Right ventricle myocardium superior (tissue), 1 donor: ENCODE measurements at regions of chr14 and their contacts with region 1.

Region 1: DNA sequence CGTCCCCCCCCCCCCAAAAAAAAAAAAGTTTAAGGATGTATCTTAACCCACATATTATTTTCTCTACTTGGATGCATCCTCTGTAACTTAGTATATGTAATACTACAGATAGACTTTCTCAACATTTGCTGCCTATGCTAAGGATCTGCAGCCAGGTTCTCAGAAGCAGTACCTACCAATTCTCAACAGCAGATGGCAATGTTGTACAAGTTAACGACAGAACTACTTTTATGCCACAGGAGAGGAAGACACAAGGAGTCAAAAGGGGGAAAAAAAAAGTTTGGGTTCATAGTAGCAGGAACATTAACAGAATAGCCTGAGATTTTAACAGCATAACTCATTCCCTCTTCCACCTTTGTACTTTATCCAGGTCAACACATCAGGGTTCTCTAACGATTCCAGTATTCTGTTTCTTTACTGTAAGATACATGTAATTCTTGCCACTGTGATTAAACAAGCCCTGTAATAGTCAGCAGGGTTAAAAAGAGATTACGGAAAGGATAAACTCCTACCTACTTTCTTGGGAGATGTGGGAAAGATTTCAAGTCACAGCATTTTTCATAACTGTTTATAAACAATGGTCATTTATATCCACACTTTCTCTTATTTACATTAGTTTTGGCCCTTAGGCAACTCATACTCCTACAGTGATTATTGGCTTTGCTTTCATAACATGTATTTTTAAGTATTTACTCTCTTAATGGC is 5.7 kb upstream of the NEK9 start:
- DNase-seq: no peak
- ATAC-seq: peak; percentile 80

Region 2: DNA sequence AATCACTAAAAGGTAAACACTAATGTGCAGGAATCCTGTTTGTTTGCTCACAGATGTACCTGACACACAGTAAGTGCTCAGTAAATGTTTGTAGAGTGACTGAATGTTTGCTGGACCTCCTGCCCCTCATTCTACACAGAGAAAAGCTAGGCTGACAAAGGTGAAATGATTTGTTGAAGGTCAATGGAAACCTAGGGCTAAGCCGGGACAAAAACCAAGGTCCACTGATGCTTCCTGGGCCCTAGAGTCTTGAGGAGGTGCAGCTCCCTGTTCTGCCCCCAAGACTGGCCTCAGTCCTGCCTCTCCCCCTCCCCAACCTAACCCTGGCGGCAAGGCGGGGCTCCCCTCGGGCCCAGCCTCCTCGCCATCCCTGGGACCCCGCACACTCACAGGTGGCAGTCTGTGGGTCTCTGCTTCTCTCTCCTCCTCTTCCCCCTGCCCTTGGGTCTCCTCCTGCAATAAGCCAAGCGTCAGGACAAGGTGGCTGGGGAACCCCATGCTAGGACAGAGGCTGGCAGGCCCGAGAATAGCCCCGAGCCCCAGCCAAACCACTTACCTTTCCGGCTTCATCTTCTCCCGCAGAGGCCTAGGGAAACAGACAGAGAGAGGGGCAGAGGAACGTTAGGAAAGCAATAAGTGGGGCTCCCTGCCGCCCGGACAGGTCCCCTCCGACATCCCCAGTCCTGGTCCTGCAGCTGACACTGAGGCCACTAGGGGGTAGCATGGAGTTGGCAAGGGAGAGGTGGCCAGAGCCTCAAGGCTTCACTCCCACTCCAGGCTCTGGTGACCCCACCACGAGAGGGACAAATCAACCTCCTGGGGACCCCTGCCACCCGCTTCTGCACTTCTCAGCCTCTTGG is 186.5 kb before region 1 on chr14:
- intact Hi-C with region 1: no loop called
- DNase-seq: peak; percentile 80
- ATAC-seq: peak; percentile 86

Region 3: DNA sequence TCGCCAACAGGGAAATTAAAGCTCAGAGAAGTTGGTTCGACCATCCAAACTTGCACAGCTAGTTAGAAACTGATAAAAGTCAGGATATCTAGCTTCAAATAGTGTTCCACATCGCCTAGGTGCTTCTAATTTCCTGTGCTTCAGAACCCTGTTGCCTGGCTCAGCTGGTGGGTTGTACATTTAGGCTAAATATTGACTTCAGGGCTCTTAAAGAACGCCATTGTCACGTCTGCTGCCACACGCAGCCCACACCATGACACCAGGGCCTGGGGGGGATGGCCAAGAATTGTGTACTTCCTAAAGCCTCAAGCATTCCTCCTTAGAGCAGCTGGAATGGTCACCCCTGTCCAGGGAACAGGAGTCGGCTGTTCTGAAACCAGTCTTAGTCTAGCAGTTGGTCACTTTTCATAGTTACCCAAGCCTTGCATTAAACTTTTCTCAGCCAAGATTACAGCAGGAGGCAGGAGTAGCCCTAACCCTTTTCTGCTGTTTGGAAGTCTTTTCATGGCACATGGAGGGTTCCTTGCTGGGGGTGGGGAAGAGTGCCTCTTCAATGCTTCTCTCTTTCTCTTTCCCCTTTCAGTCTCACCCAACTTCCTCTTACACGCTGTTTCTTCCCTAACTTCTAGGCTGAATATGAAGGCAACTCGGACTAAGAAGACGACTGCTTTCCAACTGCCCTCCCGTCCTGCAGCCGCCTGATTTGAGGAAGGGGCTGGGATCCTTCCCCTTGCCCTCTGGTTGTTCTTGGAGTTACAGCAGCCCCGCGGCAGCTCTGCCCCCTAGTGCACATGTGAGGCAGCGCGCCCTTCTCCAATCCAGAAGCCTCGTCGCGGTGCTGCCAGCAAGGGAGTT is 163.2 kb after region 1 on chr14:
- intact Hi-C with region 1: loop called (anchors 2 kb)
- DNase-seq: peak; percentile 89
- ATAC-seq: peak; percentile 46